ENCODE measurements at regions of chr13 and their contacts with region 1.

Region 1: DNA sequence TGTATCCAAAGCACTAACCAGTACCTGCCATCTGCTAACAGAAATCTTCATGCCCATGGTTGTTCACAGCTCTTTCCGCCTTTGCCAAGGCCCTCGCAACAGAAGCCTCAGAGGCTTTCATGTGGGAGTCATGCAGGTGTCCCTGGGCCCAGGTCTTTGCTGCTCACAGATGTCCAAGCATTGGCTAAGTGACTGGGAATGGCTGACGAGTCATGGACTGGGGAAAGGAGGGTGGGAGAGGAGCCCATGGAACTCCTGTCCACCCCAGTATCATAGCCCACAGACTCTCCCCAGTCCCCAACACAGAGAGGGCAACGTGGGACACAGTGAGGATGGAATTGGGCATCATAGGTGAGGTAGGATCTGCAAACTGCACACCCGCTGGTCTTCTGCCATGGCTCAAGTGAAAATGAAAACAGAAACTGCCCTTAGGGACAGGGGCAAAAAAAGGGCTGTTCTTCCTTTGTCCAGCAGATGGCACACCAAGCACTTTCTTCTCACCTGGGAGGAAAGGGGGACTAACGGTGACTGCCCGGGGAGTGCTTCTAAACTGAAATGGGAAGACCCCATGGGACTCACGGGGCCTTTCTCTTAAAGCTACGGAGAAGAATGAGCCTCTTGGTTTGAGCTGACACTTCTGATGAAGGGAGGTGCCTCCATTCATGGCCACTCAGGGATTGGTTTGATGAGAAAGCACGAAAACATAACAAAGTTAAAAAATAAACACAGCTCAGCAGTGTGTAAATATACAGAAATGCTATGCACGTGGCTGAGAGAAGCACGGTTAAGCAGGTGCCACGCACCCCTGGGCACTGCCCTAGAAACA is 11.1 kb upstream of the DHRS12 start:
- DNase-seq: peak; percentile 82
- H3K4me3 Mint-ChIP-seq: peak overlapping the region; percentile 39
- H3K27ac Mint-ChIP-seq: no peak overlapping the region
- H3K4me1 Mint-ChIP-seq: peaks cover 15% of the 10 kb centered on the region
- H3K27me3 Mint-ChIP-seq: peaks cover 37% of the 10 kb centered on the region
- CTCF ChIP-seq: peak; percentile 80

Region 2: GRCh38 chr13:51832471-51833152 is 17.6 kb after region 1 on chr13:
- CTCF ChIA-PET with region 1: interaction called, 69 read pairs
- POLR2A ChIA-PET with region 1: interaction called, 3 read pairs
- intact Hi-C with region 1: loop called (anchors 2 kb)
- DNase-seq: peak; percentile 55
- H3K4me3 Mint-ChIP-seq: no peak overlapping the region
- H3K27ac Mint-ChIP-seq: no peak overlapping the region
- H3K4me1 Mint-ChIP-seq: no peaks in the 10 kb centered on the region
- H3K27me3 Mint-ChIP-seq: peaks cover 38% of the 10 kb centered on the region
- CTCF ChIP-seq: no peak

Region 3: GRCh38 chr13:51895906-51896888 is 81.2 kb after region 1 on chr13:
- CTCF ChIA-PET with region 1: interaction called, 32 read pairs
- POLR2A ChIA-PET with region 1: no interaction called
- intact Hi-C with region 1: no loop called
- DNase-seq: peak; percentile 58
- H3K4me3 Mint-ChIP-seq: no peak overlapping the region
- H3K27ac Mint-ChIP-seq: no peak overlapping the region
- H3K4me1 Mint-ChIP-seq: no peaks in the 10 kb centered on the region
- H3K27me3 Mint-ChIP-seq: peaks cover 23% of the 10 kb centered on the region
- CTCF ChIP-seq: peak; percentile 68

Region 4: DNA sequence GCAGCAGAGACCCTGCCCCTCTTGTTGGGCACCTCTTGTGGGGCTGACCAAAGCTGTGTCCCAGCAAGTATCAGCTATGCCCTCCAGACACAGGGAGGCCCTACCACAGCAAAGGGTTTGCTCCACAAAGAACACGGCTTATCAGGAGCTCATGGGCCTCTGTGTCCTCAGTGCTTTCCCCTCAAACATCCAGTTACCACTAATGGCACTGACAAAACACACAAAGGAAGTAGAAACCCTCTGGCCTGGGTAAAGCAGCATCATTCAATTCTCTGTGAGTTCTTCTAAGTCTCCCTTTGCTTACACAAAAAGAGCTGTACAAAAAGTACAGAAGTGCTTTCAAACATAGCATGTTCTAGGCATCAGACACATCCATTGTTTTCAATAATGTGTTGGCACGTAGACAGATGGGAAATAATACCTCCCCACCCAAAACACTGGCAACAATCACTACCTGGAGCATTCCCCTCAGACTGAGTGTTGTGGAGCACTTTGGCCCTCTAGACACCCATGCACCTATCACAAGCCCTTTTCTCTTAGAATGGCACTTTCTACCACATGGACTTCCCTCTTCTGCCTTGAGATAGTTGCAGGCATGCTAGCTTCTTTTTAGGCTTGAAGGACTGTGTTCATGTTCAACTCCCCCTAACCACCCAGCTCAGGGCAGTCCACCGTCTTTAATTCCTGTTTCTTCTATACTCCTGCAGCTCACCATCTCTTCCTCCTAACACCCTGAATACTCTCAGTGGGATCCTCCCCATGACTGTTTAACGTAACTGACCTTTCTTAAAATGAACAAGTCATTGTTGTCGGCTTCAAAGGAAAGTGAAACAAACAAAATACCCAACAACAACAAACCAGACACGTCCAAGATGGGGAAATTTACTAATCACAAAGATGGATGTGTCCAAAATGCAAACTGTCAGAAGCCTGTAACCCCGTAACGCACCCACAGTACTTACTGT is 152.7 kb after region 1 on chr13:
- CTCF ChIA-PET with region 1: no interaction called
- POLR2A ChIA-PET with region 1: no interaction called
- intact Hi-C with region 1: no loop called
- DNase-seq: no peak
- H3K4me3 Mint-ChIP-seq: no peak overlapping the region
- H3K27ac Mint-ChIP-seq: no peak overlapping the region
- H3K4me1 Mint-ChIP-seq: no peaks in the 10 kb centered on the region
- H3K27me3 Mint-ChIP-seq: no peaks in the 10 kb centered on the region
- CTCF ChIP-seq: no peak

Region 5: GRCh38 chr13:52104624-52105023 is 289.6 kb after region 1 on chr13:
- CTCF ChIA-PET with region 1: interaction called, 11 read pairs
- POLR2A ChIA-PET with region 1: no interaction called
- intact Hi-C with region 1: no loop called
- DNase-seq: peak; percentile 44
- H3K4me3 Mint-ChIP-seq: no peak overlapping the region
- H3K27ac Mint-ChIP-seq: no peak overlapping the region
- H3K4me1 Mint-ChIP-seq: peaks cover 7% of the 10 kb centered on the region
- H3K27me3 Mint-ChIP-seq: no peaks in the 10 kb centered on the region
- CTCF ChIP-seq: no peak

Measured in MCF 10A (cell line).